Right ventricle myocardium inferior (tissue), 1 donor: ENCODE measurements at regions of chr4 and their contacts with region 1.

Region 1: GRCh38 chr4:4256799-4257198 is 8.8 kb upstream of the TMEM128 start:
- DNase-seq: no peak
- ATAC-seq: no peak

Region 2: DNA sequence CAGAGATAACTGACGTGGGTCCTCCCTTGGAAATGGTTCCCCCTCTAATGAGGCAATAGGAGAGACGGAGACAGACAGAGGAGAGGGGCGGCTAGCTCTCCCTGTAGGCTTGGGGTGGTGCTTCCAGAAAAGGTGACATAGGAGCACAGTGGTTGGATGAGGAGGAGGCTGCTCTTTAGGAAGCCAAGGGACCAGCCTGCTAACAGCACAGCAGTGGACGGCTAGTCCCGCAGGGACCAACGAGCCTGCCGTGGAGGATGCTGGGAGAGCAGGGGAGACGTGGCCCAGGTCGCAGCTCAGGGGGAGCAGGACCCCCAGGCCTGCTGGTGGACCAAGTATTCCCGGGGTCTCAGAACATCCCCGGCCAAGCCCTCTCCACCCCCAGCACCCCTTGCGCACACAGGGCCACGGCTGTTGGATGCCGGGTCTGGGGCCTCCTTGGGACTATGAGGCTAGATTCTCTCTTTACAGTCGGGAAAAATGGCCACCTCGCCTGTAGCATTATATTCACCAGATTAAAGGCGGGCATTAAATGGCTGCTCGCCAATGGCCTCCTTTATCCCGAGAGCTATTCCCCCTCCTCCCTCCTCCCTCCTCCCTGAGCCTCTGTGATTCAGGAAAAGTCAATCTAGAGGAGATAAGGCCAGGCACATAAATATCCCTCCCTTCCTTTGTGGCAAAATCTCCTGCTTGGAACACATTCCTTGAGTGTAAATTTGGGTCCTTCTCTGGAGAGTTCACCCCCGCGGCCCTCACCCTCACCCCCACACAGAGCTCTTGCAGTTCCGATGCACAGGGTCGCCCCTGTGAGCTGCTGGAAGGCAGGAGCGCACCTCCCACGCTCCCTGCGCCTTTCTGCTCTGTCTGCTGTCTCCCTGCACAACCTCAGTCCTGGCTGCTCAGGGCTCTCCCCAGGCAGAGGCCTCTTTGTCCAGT is 99.6 kb after region 1 on chr4:
- intact Hi-C with region 1: no loop called
- DNase-seq: no peak
- ATAC-seq: no peak

Region 3: DNA sequence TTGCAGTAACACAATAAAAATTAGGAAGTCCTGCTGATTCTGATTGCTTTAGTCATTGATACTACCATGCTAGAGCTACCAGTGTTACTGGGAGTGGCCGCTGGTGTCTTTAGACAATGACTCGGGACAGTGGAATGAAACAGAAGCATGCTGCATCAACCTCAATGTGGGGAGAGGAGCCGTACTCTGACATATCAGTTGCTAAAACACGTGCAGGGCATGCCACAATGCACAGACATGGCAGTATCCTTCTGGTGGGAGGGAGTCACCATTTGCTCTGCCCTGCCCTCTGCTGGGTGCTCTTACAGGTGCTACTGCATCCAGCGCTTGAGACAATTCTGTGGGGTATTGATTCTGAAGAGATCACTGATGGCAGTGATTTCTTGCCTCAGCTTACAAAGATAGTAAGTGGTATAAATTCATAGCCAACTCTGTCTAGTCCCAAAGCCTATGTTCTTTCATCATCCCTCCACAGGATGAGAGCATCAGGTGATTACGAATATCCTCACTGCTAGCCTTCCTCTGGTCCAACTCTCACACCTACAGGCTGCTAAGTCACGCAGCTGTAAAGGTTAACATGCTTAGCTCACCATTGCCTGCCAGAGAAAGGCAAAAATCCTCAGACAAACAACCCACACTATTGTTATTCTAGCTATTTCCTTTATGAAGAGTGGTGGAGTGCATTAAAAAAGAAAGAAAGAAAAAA is 173.8 kb after region 1 on chr4:
- intact Hi-C with region 1: loop called (anchors 10 kb)
- DNase-seq: no peak
- ATAC-seq: peak; percentile 43

Region 4: GRCh38 chr4:4614925-4615678 is 358.3 kb after region 1 on chr4:
- intact Hi-C with region 1: no loop called
- DNase-seq: no peak
- ATAC-seq: no peak